ENCODE measurements at regions of chr3 and their contacts with region 1.

Region 1: GRCh38 chr3:129183569-129184395 is at the start of gene CNBP:
- DNase-seq: peak; percentile 91
- H3K4me3 Mint-ChIP-seq: peak within 1 kb of the TSS; percentile 97
- H3K27ac Mint-ChIP-seq: peak within 1 kb of the TSS; percentile 98
- H3K4me1 Mint-ChIP-seq: peaks cover 42% of the 10 kb centered on the region
- H3K27me3 Mint-ChIP-seq: no peaks in the 10 kb centered on the region
- total RNA-seq, gene CNBP: 351 TPM in 2 replicates

Region 2: GRCh38 chr3:129160891-129161859 is 22.6 kb before region 1 on chr3 and contains the start of gene ISY1:
- intact Hi-C with region 1: loop called (anchors 1 kb)
- DNase-seq: peak; percentile 89
- H3K4me3 Mint-ChIP-seq: peak within 1 kb of the TSS; percentile 88
- H3K27ac Mint-ChIP-seq: peak within 1 kb of the TSS; percentile 98
- H3K4me1 Mint-ChIP-seq: peaks cover 27% of the 10 kb centered on the region
- H3K27me3 Mint-ChIP-seq: no peaks in the 10 kb centered on the region
- total RNA-seq, gene ISY1: 71.4 and 78.0 TPM in 2 replicates

Region 3: DNA sequence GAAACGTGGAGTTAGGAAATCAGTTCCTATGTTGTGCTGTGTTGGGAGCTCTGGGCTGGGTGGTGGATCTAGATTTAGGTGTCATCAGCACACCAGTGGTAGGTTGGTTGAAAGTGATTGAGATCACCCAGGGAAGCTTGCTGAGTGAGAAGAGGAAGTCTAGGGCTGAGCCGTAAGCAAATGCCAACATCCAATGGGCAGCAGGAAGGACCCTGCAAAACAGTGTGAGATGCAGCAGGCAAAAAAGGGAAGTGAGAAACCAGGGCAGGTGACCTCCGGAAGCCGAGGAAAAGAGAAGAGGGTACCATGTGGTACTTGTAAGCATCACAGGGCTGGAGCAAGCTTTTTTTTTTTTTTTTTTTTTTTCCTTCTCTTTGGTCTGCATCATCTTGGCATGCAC is 49.8 kb after region 1 on chr3:
- intact Hi-C with region 1: loop called (anchors 1 kb)
- DNase-seq: no peak
- H3K4me3 Mint-ChIP-seq: no peak overlapping the region
- H3K27ac Mint-ChIP-seq: peak overlapping the region; percentile 73
- H3K4me1 Mint-ChIP-seq: peaks cover 58% of the 10 kb centered on the region
- H3K27me3 Mint-ChIP-seq: no peaks in the 10 kb centered on the region

Region 4: DNA sequence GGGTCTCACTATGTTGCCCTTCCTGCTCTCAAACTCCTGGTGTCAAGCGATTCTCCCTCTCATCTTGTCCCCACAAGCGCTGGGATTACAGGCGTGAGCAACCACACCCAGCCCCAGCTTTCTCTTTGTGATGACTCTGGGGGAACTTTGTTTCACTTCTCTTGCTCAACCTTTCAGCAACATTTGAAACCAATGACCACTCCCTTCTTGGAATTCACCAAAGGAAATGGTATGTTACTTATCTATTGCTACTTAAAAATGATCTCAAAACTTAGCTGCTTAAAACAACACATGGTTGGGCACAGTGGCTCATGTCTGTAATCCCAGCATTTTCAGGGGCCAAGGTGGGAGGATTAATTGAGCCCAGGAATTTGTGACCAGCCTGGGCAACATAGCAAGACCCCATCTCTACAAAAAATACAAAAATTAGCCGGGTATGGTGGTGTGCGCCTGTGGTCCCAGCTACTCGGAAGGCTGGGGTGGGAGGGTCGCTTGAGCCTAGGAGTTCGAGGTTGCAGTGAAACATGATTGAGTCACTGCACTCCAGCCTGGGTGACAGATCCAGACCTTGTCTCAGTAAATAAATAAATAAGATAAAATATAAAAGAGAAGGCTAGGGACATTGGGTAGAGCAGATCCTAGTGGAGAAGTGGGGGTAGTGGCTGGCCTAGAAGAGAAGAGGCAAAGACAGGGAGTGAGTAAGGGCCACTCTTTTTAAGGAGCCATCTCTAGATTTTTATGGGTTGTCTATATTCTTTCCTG is 55.3 kb after region 1 on chr3:
- intact Hi-C with region 1: loop called (anchors 2 kb)
- DNase-seq: peak; percentile 53
- H3K4me3 Mint-ChIP-seq: peak overlapping the region; percentile 43
- H3K27ac Mint-ChIP-seq: peak overlapping the region; percentile 93
- H3K4me1 Mint-ChIP-seq: peaks cover 40% of the 10 kb centered on the region
- H3K27me3 Mint-ChIP-seq: no peaks in the 10 kb centered on the region

Region 5: DNA sequence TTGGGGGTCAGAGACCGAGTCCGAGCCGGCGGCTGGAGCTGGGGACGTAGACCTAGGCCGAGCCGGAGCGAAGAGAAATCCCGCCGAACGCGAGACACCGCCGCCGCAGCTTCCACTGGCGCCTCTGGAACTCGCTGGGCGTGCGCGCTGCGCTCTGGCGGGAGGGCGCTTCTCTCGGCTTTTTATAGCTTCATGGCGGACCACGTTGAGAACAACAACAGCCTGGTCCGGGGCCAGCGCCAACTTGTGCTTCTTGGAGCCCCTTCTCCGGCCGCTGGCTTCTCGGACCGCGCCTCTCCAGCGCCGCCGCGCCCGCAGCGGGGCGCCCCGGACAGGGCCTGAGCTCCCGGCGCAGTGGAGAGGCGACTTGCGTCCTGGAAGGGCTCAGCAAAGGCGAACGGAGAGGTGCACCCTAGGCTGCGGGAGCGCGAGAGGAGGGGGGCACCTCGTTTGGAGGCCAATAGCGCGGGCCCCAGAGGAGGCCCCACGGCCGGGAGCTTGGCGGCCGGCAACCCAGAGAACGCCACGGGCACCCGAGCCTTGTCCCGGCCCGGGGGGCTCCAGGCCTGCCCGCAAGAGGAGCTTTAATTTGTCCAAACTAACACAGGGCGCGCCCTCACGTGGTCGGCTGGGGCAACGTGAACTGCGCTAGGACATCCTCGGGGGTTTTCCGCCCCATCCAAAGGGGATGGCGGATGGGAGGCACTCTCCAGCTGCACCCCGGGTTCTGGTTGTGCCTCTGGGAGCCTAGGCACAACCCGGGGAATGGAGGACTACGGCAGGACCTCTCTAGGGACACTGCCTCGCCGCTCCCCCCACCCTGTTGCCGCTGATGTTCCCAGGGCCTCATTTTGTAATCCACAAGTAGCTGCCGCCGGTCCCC is 132.6 kb after region 1 on chr3:
- intact Hi-C with region 1: loop called (anchors 5 kb)
- DNase-seq: peak; percentile 89
- H3K4me3 Mint-ChIP-seq: peak overlapping the region; percentile 71
- H3K27ac Mint-ChIP-seq: peak overlapping the region; percentile 53
- H3K4me1 Mint-ChIP-seq: peaks cover 16% of the 10 kb centered on the region
- H3K27me3 Mint-ChIP-seq: no peaks in the 10 kb centered on the region

Measured in activated T-helper 2 cell treated with anti-CD3 and anti-CD28 coated beads, Interferon-gamma antibody, Interleukin-2, Interleukin-4, amounts not matched to agents 10 μg/mL and 5 μg/mL and 100 μg/mL, durations not matched to agents 14 hours and 24 hours and 36 hours (primary cell).